Upper lobe of right lung (tissue), 1 donor: ENCODE measurements at regions of chr14 and their contacts with region 1.

Region 1: DNA sequence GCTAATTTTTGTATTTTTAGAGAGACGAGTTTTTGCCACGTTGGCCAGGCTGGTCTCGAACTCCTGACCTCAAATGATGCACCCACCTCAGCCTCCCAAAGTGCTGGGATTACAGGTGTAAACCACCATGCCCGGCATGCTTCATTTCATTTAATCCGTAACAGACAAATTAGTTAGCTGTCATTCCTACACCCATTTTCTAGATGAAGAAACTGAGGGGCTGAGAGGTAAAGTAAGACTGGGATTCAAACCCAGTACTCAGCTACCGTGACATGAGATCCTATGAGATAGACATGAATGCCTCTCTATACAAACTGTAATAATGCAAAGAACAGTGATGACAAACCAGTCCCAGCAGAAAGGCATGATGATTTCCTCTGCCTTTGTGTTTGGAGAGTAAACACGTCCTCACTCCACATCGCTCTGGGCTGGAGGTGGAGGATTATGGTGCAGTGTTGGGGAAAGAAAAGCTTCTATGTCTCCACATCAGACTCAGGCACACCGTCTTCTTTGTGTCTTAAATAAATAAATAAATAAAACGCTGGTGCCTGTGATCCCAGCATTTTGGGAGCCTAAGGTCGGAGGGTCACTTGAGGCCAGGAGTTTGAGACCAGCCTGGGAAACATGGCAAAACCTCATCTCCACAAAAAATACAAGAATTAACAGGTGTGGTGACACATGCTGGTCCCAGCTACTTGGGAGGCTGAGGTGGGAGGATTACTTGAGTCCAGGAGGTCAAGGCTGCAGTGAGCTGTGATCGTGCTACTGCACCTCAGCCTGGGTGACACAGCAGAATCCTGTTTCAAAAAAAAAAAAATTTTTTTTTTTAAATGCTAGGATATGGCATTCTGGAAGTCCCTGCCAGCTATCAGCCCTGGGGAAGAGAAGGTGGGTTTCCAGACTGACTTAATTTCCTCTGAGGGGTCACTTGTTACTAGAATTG is 10.5 kb downstream of the VSX2 start:
- DNase-seq: no peak
- ATAC-seq: no peak
- H3K4me3 ChIP-seq: no peak overlapping the region
- H3K27ac ChIP-seq: no peak overlapping the region
- H3K4me1 ChIP-seq: no peaks in the 10 kb centered on the region
- H3K27me3 ChIP-seq: peaks cover 25% of the 10 kb centered on the region
- CTCF ChIP-seq: no peak

Region 2: DNA sequence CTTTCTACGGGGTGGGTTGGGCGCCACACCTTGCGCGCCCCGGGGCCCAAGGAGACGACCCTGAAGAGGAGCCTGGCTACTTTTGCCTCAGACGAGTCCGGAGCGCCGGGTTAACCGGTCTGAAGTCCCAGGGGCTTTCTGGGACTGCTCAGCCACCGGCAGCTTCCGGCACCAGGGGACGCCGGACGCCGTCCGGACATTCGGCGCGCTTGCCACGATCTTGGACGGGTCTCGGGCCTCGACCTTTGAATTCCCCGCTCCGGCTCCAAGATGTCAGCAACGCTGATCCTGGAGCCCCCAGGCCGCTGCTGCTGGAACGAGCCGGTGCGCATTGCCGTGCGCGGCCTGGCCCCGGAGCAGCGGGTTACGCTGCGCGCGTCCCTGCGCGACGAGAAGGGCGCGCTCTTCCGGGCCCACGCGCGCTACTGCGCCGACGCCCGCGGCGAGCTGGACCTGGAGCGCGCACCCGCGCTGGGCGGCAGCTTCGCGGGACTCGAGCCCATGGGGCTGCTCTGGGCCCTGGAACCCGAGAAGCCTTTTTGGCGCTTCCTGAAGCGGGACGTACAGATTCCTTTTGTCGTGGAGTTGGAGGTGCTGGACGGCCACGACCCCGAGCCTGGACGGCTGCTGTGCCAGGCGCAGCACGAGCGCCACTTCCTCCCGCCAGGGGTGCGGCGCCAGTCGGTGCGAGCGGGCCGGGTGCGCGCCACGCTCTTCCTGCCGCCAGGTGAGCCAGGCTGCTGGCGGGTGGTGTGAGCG is 657.8 kb before region 1 on chr14 and contains the start of gene ACOT4:
- intact Hi-C with region 1: no loop called
- DNase-seq: peak; percentile 80
- ATAC-seq: peak; percentile 96
- H3K4me3 ChIP-seq: peak within 1 kb of the TSS; percentile 64
- H3K27ac ChIP-seq: peak within 1 kb of the TSS; percentile 73
- H3K4me1 ChIP-seq: peaks cover 3% of the 10 kb centered on the region
- H3K27me3 ChIP-seq: no peaks in the 10 kb centered on the region
- CTCF ChIP-seq: peak; percentile 11
- total RNA-seq, gene ACOT4: 4.5 TPM

Region 3: DNA sequence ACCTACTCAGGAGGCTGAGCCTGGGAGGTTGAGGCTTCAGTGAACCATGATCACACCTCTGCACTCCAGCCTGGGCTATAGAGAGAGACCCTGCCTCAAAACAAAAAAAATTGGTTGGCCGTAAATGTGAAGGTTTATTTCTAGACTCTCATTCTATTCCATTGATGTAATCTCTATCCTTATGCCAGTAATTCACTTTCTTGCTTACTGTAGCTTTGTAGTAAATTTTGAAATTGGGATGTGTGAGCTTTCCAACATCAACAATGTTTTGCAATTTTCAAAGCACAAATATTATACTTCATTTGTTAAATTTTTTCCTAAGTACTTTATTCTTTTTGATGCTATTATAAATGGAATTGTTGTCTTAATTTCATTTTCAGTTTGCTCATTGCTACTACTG is 140.3 kb before region 1 on chr14:
- intact Hi-C with region 1: loop called (anchors 5 kb)
- DNase-seq: no peak
- ATAC-seq: no peak
- H3K4me3 ChIP-seq: no peak overlapping the region
- H3K27ac ChIP-seq: no peak overlapping the region
- H3K4me1 ChIP-seq: no peaks in the 10 kb centered on the region
- H3K27me3 ChIP-seq: no peaks in the 10 kb centered on the region
- CTCF ChIP-seq: no peak

Region 4: GRCh38 chr14:74508292-74508731 is 258.6 kb after region 1 on chr14:
- intact Hi-C with region 1: no loop called
- DNase-seq: peak; percentile 51
- ATAC-seq: no peak
- H3K4me3 ChIP-seq: no peak overlapping the region
- H3K27ac ChIP-seq: no peak overlapping the region
- H3K4me1 ChIP-seq: no peaks in the 10 kb centered on the region
- H3K27me3 ChIP-seq: no peaks in the 10 kb centered on the region
- CTCF ChIP-seq: no peak